HEK293 (cell line): ENCODE measurements at regions of chr9 and their contacts with region 1.

Region 1: DNA sequence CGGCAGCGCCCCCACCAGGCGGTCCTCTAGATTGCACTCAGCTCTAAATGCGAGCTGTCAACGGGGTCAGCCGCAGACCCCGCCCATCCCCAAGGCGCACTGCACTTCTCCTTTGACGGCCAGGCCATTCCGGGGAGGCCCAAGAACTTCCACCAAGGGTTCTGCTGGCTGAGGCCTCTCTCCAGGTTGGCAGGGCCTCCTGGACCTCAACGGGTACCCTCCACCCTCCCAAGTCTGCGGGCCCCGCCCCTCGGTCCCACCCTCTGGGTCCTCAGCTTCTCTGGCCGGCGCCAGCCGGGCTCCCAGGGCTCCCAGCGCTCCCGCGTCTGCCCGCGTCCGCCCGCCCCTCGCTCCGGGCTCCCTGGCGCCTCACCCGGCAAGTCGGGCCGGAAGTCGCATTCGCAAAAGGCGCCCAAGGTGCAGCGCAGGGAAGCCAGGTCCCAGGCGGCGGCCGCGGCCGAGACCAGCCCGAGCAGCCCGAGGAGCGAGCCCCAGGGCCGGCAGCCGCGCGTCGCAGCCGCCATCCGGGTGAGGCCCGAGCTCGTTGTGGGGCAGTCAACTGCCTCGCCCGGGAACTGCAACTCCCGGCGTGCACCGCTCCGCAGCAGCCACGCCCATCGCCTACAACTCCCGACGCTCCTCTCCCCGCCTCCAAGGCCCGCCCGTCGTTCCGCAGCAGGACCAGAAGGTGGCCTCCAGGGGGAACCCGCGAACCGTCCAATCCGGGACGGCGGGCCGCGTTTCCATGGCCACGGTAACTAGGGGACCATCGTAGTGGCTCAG is at the start of gene TOR2A:
- H3K4me3 ChIP-seq: peak within 1 kb of the TSS; percentile 70
- H3K27ac ChIP-seq: peak within 1 kb of the TSS; percentile 75
- H3K4me1 ChIP-seq: no peaks in the 10 kb centered on the region
- CTCF ChIP-seq: peak; percentile 93

Region 2: DNA sequence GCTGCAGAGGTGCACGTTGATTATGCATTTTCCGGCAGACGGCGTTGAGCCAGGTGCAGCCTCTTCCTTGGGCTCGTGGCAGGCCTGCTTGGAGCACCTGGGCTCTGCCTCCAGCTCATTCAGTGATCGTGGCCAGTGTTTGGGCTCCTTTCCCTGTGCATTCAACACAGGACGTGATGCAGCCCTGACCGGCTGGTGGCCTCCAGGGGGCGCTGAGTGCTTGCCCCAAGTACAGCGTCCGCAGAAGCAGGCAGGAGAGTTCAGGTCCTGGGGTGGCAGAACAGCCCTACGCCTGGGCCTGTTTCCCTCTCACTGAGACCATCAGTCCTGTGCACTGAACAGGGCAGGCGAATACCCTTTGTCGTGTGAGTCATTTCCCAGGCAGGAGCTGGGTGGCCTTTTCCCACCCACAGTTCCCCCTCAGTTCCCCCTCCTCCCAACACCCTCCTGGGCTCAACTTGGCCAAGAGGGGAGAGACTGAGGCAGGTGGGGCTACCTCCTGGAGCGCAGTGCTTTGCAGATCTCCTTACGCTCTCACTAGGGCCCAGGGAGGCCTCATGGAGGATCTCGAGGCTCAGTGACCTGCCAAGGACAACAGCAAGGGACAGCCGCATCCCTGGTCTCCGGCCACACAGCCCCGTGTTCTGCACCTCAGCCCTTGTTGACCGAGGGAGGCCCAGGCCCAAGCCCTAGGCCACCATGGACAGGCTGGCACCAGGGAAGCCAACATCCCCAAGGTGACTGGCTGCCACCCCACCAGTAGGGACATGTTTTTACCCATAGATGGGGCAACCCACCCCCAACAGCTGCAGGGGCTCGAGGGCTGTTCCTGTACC is 230.8 kb before region 1 on chr9:
- CTCF ChIA-PET with region 1: interaction called, 25 read pairs
- POLR2A ChIA-PET with region 1: no interaction called
- H3K4me3 ChIP-seq: no peak overlapping the region
- H3K27ac ChIP-seq: no peak overlapping the region
- H3K4me1 ChIP-seq: no peaks in the 10 kb centered on the region
- CTCF ChIP-seq: peak; percentile 79

Region 3: GRCh38 chr9:127598839-127599548 is 135.9 kb before region 1 on chr9:
- CTCF ChIA-PET with region 1: interaction called, 20 read pairs
- POLR2A ChIA-PET with region 1: interaction called, 4 read pairs
- H3K4me3 ChIP-seq: no peak overlapping the region
- H3K27ac ChIP-seq: no peak overlapping the region
- H3K4me1 ChIP-seq: 0 out of 2 replicates have a peak, but pooled peaks cover 2% of the 10 kb centered on the region
- CTCF ChIP-seq: no peak

Region 4: GRCh38 chr9:127715394-127716337 is 19.3 kb before region 1 on chr9 and contains the starts of genes PTRH1 and TTC16:
- CTCF ChIA-PET with region 1: interaction called, 10 read pairs
- POLR2A ChIA-PET with region 1: interaction called, 9 read pairs
- H3K4me3 ChIP-seq: peak within 1 kb of the TSS; percentile 79
- H3K27ac ChIP-seq: no peak within 1 kb of the TSS; the same call in 1 of the 2 replicates
- H3K4me1 ChIP-seq: no peaks in the 10 kb centered on the region
- CTCF ChIP-seq: no peak

Region 5: GRCh38 chr9:127770905-127771569 is 36.1 kb after region 1 on chr9:
- CTCF ChIA-PET with region 1: interaction called, 12 read pairs
- POLR2A ChIA-PET with region 1: interaction called, 10 read pairs
- H3K4me3 ChIP-seq: peak overlapping the region; percentile 43
- H3K27ac ChIP-seq: no peak overlapping the region
- H3K4me1 ChIP-seq: no peaks in the 10 kb centered on the region
- CTCF ChIP-seq: no peak

Region 6: DNA sequence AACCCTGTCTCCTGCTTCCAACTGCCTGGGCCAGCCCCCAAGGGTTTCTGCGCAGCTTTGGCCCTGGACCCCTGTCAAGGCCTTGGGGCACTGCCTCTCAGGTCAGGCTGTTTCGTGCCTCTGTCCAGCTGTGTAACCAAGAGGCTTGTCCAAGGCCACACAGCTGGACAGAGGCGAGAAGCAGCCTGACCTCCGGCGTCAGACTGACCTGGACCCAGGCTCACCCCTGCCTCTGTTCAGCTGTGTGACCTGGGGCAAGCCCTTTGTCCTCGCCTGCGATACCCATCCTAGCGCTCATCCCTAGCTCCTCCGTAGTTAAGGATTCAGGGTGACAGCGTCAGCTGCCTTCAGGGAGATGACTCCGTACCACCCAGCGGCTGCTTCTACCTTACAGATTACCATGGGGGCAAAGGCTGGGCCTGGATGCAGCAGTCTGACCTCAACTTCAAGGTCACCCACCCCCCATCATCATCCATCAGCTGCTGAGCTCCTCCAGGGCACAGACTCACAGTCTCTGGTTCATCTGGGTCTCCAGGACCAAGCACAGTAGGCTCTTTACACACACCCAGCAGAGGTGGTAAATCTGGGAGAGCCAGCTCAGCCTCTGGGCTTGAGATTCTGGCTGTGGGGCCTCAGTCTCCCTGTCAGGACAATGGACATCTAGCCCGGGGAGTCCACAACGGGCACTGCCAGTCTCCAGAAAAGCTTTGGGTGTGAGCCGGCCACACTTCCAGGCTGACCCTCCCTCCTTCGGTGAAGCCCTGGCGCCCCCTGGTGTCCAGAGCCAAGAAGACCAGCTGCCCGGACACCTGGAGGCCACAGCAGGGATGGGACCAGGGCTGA is 134.6 kb after region 1 on chr9:
- CTCF ChIA-PET with region 1: interaction called, 33 read pairs
- POLR2A ChIA-PET with region 1: interaction called, 7 read pairs
- H3K4me3 ChIP-seq: no peak overlapping the region
- H3K27ac ChIP-seq: no peak overlapping the region
- H3K4me1 ChIP-seq: no peaks in the 10 kb centered on the region; the same call in 1 of the 2 replicates
- CTCF ChIP-seq: peak; percentile 87